Activated CD4-positive, alpha-beta T cell treated with anti-CD3 and anti-CD28 coated beads, Interleukin-2, amount 10 ng/mL, durations not matched to agents 7 days and 5 days (primary cell): ENCODE measurements at regions of chr3 and their contacts with region 1.

Region 1: DNA sequence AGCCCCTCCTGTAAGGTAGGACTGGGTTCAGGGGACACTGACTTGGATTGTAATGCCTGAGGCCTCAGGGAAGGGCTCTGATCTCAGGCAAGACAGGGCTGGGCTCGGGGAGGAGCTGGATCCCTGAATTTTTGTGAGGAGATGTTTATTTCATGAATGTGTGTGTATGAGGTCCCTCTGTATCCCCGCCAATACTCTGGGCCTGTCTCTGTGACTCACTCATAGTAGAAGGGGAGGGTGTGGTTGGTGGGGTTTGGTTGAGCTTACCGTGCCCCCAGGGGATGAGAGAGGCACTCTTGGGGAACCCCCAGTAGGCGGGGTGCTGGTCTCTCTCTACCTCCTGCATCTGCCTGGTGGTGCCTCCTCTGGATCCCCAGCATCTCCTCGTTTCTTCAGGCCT is 28.1 kb downstream of the RPSA start:
- DNase-seq: no peak
- H3K4me3 Mint-ChIP-seq: no peak overlapping the region
- H3K27ac Mint-ChIP-seq: no peak overlapping the region
- H3K4me1 Mint-ChIP-seq: no peaks in the 10 kb centered on the region
- H3K27me3 Mint-ChIP-seq: peaks cover 3% of the 10 kb centered on the region

Region 2: DNA sequence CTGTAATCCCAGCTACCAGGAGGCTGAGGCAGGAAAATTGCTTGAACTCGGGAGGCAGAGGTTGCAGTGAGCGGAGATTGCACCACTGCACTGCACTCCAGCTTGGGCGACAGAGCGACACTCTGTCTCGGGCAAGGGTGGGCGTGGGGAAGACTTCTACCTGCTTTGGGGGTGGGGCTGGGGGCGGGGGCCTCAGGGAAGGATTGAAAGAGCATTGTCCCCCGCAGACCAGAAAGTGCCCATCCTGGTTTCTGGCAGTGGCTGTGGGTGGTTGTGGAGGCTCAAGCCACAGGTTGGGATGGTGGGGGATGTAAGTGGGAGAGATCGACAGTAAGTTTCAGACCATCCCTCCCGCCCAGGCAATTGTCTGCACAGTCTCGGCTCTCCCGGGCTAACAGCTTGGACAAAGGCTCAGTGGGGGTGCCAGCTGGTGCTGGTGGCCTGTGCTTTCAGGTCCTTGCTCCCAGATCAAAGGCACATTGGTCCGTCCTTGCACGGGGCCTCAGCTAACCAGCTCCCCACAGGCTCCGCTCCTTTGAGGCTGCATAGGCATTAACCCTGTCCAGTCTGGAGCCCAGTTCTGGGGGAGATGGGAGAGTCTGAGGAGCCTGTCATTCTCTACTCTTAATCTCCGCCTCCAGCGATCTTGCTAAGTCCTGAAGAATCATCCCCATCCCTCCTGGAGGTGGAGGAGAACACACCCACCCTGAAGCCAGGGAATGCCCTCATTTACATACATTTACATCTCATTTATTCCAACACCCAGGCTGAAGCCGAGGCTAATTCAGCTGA is 793.7 kb before region 1 on chr3:
- CTCF ChIA-PET with region 1: no interaction called
- POLR2A ChIA-PET with region 1: no interaction called
- DNase-seq: no peak
- H3K4me3 Mint-ChIP-seq: no peak overlapping the region
- H3K27ac Mint-ChIP-seq: no peak overlapping the region
- H3K4me1 Mint-ChIP-seq: no peaks in the 10 kb centered on the region
- H3K27me3 Mint-ChIP-seq: peaks cover 7% of the 10 kb centered on the region

Region 3: DNA sequence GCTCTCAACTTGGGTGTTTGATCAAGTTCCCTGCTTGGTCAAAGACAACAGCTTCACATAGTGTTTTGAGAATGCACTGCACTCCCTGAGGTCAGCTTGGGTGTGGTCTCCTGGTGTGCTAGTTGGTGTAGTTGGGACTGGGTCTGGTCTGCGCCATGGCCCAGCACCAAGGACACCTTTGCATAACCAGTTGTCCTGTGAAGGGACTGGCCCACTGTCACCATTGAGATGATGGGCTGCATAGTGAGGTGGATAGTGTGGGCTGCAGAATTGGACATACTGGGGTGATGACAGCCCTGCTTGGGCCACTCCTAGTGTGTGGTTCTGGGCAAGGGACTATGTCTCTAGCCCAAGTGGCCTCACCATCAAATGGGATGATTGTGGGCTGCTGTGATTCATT is 18.6 kb before region 1 on chr3:
- CTCF ChIA-PET with region 1: interaction called, 3 read pairs
- POLR2A ChIA-PET with region 1: interaction called, 14 read pairs
- DNase-seq: no peak
- H3K4me3 Mint-ChIP-seq: no peak overlapping the region
- H3K27ac Mint-ChIP-seq: no peak overlapping the region
- H3K4me1 Mint-ChIP-seq: peaks cover 11% of the 10 kb centered on the region
- H3K27me3 Mint-ChIP-seq: no peaks in the 10 kb centered on the region